K562 (cell line): ENCODE measurements at regions of chr10 and their contacts with region 1.

Region 1: DNA sequence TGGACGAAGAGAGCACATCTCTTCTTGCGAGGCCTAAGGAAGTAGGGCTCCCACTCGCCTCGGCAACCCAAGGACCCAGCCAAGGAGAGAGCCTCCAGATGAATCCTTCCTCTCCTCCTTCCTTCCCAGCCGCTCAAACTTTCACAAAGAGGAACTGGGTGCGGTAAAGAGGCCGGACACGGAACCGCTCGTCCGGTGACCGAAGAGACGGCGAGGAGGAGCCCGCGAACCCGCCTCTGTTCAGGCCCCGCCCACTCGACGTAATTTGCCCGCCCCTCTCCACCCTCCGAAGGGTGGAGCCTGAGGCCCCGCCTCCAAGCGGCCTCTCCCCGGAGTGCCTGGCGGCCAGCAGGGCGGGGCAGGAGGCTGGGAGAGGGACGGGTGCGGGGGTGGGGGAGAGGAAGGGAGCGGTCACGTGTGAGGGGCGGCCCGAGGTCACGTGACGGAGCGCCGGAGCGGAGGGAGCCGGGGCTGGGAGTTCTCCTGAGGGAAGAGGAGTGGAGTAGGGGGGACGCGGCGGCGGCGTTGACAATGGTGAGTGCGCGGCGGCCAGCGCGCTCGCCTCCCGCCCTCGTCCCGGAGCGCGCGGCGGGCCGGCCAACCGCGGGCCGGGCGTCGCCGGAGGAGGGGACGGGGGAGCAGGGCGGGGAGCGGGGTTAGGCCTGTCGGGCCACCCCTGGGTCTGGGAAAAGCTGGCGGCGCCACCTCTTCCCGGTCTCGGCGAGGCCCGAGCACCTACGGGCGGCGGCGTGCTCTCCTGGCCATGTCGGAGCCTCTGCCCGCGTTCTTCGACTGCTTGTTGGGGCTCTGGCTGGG is at the start of gene VPS26A:
- DNase-seq: peak; percentile 99 to 100 (median 100)
- ATAC-seq: peak; percentile 91
- H3K4me3 ChIP-seq: peak within 1 kb of the TSS; percentile 84
- H3K27ac ChIP-seq: peak within 1 kb of the TSS; percentile 90
- H3K4me1 ChIP-seq: peaks cover 10 to 12% of the 10 kb centered on the region in 2 experiments; a peak in 3 of 5 replicates
- H3K27me3 ChIP-seq: no peaks in the 10 kb centered on the region
- CTCF ChIP-seq: peak in 2 of 3 experiments; percentile 21 to 65; a peak in 2 of 6 replicates
- EP300 ChIP-seq: 0 out of 2 replicates have a peak, but pooled peaks have one; percentile 19
- POLR2A ChIP-seq: peak; percentile 98
- RAD21 ChIP-seq: peak in 1 of 2 experiments; percentile 60; a peak in 2 of 4 replicates
- polyA plus RNA-seq, gene VPS26A: 117 to 137 TPM

Region 2: DNA sequence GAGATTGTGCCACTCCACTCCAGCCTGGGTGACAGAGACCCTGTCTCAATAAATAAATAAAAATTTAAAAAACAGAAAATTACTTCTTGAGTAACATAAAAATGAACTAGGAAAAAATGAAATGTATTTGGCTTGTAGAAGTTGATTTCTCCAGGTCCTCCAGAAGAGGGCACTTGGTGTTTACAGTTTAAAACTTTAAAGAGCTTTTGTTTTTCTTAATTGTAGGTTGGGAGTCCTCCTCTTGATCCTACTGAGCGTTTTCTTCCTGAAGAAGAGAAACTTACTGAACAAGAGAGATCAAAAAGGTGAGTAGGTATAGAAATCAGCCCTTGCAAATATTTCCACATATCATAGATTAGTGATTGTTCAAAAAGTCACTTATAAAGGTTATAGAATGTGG is 119.1 kb before region 1 on chr10:
- CTCF ChIA-PET with region 1: interaction called, 16 read pairs
- POLR2A ChIA-PET with region 1: no interaction called
- in situ Hi-C with region 1: no loop called
- intact Hi-C with region 1: no loop called
- DNase-seq: peak in 2 of 4 experiments; percentile 38 to 56
- ATAC-seq: peak; percentile 83
- H3K4me3 ChIP-seq: no peak overlapping the region
- H3K27ac ChIP-seq: no peak overlapping the region
- H3K4me1 ChIP-seq: no peaks in the 10 kb centered on the region
- H3K27me3 ChIP-seq: no peaks in the 10 kb centered on the region
- CTCF ChIP-seq: peak; percentile 54 to 90 (median 62); a peak in 5 of 6 replicates
- EP300 ChIP-seq: no peak
- POLR2A ChIP-seq: no peak
- RAD21 ChIP-seq: peak; percentile 91 to 98

Region 3: DNA sequence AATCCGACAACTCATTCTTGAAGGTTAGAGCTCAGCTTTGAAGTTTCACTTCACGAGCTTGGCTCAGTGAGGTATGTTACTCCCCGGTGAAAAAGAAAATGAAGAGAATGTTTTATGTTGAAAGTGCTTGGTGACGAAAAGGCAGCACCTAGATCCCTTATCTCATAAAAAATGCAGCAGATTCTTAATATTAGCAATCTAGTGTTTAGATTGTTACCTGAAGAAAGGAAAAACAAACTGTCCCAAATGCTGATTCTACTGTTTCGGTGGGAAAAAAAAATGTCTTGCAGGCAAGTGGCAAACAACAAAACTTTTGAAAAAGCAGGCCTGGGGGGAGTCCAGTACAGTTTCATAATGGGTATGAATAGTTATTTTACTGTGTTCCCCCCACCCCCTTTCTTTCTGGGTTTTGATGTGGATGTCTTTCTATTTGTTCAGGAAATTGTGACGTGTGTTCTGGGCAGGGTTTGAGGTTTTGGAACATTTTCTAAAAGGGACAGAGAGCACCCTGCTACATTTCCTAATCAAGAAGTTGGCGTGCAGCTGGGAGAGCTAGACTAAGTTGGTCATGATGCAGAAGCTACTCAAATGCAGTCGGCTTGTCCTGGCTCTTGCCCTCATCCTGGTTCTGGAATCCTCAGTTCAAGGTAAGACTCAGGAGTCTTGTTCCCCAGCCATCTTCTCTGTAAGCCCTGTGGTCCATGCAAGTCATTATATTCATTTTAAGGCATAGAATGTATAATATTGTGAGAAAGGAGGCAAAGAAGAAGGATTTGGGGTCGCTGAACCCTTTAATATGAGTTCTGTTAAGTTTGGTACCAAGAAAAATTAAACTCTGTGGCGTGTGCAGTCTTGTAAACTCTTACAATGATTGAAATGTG is 36.1 kb before region 1 on chr10 and contains the start of gene SRGN:
- CTCF ChIA-PET with region 1: interaction called, 5 read pairs
- POLR2A ChIA-PET with region 1: interaction called, 9 read pairs
- in situ Hi-C with region 1: no loop called
- intact Hi-C with region 1: loop called (anchors 2 kb)
- DNase-seq: peak in 3 of 4 experiments; percentile 27 to 90 (median 79)
- ATAC-seq: peak; percentile 70
- H3K4me3 ChIP-seq: peak within 1 kb of the TSS; percentile 51
- H3K27ac ChIP-seq: peak within 1 kb of the TSS; percentile 89
- H3K4me1 ChIP-seq: peaks cover 3 to 28% of the 10 kb centered on the region in 2 experiments; a peak in 4 of 5 replicates
- H3K27me3 ChIP-seq: no peaks in the 10 kb centered on the region
- CTCF ChIP-seq: no peak
- EP300 ChIP-seq: no peak
- POLR2A ChIP-seq: peak; percentile 96
- RAD21 ChIP-seq: no peak
- polyA plus RNA-seq, gene SRGN: 275 to 304 TPM

Region 4: GRCh38 chr10:69179743-69180524 is 56.0 kb after region 1 on chr10 and contains the start of gene SUPV3L1:
- CTCF ChIA-PET with region 1: no interaction called
- POLR2A ChIA-PET with region 1: interaction called, 4 read pairs
- in situ Hi-C with region 1: no loop called
- intact Hi-C with region 1: loop called (anchors 1 kb)
- DNase-seq: peak; percentile 96 to 99 (median 98)
- ATAC-seq: peak; percentile 88
- H3K4me3 ChIP-seq: peak within 1 kb of the TSS; percentile 99
- H3K27ac ChIP-seq: peak within 1 kb of the TSS; percentile 99
- H3K4me1 ChIP-seq: peaks cover 7 to 8% of the 10 kb centered on the region in 2 experiments; a peak in 3 of 5 replicates
- H3K27me3 ChIP-seq: no peaks in the 10 kb centered on the region
- CTCF ChIP-seq: no peak; a peak in 1 of 6 replicates
- EP300 ChIP-seq: no peak; the same call in none of the 2 replicates
- POLR2A ChIP-seq: peak; percentile 92
- RAD21 ChIP-seq: peak in 1 of 2 experiments; percentile 28; a peak in 2 of 4 replicates
- polyA plus RNA-seq, gene SUPV3L1: 45.2 to 66.1 TPM

Region 5: DNA sequence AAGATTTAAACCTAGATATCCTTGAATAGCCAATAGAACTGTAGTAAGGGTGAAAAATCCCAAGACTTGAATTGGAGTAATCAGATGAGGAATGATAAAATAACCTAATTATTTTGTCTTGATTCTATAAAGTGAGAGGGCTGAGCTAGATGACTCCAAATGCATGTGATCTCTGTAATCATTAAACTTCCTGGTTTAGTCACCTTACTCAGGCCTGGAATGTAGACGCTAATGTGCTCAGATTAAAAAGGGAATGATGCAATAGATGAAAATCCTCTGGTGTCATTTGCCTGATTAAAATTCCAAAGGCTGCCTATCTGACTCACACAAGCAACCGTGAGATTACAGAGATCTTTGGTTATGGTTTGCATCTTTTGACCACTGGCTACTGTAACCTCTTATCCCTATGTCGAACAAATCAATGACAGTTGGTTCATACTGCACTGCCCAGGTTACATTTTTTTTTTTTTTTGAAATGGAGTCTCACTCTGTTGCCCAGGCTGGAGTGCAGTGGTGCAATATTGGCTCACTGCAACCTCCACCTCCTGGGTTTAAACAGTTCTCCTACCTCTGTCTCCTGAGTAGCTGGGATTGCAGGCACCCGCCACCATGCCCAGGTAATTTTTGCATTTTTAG is 93.3 kb after region 1 on chr10:
- CTCF ChIA-PET with region 1: interaction called, 3 read pairs
- POLR2A ChIA-PET with region 1: no interaction called
- in situ Hi-C with region 1: no loop called
- intact Hi-C with region 1: loop called (anchors 5 kb)
- DNase-seq: peak in 1 of 4 experiments; percentile 53
- ATAC-seq: peak; percentile 65
- H3K4me3 ChIP-seq: no peak overlapping the region
- H3K27ac ChIP-seq: no peak overlapping the region; the same call in 2 of the 3 replicates
- H3K4me1 ChIP-seq: peaks cover 6 to 39% of the 10 kb centered on the region in 2 experiments
- H3K27me3 ChIP-seq: no peaks in the 10 kb centered on the region
- CTCF ChIP-seq: no peak
- EP300 ChIP-seq: peak; percentile 94
- POLR2A ChIP-seq: no peak
- RAD21 ChIP-seq: peak in 1 of 2 experiments; percentile 27; a peak in 2 of 4 replicates